Colonic mucosa (tissue), 4 donors: ENCODE measurements at regions of chr3 and their contacts with region 1.

Region 1: DNA sequence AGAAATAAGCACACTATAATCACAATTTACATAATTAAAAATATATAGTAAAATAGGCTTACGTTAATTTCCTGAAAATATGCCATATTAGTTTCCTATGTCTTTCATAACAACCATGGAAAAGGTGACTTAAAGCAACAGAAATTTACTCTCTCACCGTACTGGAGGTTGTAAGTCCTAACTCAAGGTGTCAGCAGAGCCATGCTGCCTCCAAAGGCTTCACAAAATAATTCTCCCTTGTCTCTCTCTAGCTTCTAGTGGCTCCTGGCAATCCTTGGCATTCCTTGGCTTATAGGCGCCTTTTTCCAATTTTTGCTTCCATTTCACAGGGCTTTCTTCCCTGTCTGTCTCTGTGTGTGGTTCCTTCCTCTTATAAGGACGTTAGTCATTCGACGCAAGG is 7.6 kb downstream of the SI start:
- DNase-seq: no peak
- H3K4me3 ChIP-seq: no peak overlapping the region
- H3K27ac ChIP-seq: no peak overlapping the region
- H3K4me1 ChIP-seq: no peaks in the 10 kb centered on the region
- H3K27me3 ChIP-seq: no peaks in the 10 kb centered on the region
- CTCF ChIP-seq: no peak

Region 2: DNA sequence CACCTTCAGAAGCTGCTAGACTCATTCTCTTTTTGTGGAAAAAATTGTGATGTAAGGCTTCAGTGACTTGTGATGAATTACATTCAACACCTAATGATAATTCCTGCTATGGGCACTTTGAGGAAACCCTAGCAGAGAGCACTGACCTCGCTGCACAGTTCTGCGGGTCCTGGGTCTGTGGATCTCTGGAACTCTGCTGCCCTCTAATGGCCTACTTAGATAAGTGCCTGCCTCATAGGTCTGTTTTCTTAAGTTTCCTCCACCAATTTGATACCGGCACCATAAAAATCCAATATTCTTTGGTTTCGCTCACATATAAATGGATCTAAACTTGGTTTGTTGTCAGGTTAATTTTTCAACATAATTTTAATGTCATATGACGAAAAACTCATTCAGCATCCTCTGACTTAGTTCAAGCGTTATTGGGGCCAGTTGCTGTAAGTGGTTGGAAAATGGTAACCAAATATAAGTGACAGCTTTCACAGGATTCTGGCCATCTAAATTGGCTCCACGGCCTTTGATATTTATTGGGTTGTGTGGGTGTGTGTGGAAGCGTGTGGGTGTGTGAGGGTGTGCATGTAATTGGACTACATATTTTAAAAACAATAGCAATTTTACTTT is 115.1 kb after region 1 on chr3:
- intact Hi-C with region 1: loop called (anchors 10 kb)
- DNase-seq: peak; percentile 72
- H3K4me3 ChIP-seq: no peak overlapping the region
- H3K27ac ChIP-seq: no peak overlapping the region
- H3K4me1 ChIP-seq: no peaks in the 10 kb centered on the region
- H3K27me3 ChIP-seq: no peaks in the 10 kb centered on the region
- CTCF ChIP-seq: peak; percentile 77